SK-N-SH (cell line): ENCODE measurements at regions of chr17 and their contacts with region 1.

Region 1: DNA sequence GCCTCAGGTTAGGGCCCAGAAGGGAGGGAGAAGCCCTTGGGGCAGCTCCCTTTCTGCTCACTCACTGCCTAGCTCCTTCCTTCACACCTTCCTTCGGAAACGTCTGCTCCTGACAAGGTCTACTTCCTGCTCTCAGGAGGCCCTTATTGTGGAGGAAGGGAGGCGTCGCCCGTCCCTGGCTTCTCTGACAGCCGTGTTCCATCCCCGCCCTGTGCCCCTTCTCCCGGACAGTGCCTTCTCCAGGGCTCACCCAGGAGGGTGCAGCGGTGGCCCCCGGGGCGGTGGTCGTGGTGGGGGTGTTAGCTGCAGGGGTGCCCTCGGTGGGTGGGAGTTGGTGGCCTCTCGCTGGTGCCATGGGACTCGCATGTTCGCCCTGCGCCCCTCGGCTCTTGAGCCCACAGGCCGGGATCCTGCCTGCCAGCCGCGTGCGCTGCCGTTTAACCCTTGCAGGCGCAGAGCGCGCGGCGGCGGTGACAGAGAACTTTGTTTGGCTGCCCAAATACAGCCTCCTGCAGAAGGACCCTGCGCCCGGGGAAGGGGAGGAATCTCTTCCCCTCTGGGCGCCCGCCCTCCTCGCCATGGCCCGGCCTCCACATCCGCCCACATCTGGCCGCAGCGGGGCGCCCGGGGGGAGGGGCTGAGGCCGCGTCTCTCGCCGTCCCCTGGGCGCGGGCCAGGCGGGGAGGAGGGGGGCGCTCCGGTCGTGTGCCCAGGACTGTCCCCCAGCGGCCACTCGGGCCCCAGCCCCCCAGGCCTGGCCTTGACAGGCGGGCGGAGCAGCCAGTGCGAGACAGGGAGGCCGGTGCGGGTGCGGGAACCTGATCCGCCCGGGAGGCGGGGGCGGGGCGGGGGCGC is 231.9 kb downstream of the SEC14L1 start:
- DNase-seq: peak; percentile 98
- H3K4me3 ChIP-seq: peak overlapping the region; percentile 88 to 95
- H3K27ac ChIP-seq: peak overlapping the region in 1 of 2 experiments; percentile 100; a peak in 2 of 4 replicates
- H3K4me1 ChIP-seq: peaks cover 31 to 64% of the 10 kb centered on the region in 2 experiments
- H3K27me3 ChIP-seq: no peaks in the 10 kb centered on the region
- CTCF ChIP-seq: no peak
- EP300 ChIP-seq: no peak
- RAD21 ChIP-seq: peak; percentile 28

Region 2: GRCh38 chr17:77312786-77313599 is 59.7 kb before region 1 on chr17:
- CTCF ChIA-PET with region 1: interaction called, 3 read pairs
- POLR2A ChIA-PET with region 1: interaction called, 12 read pairs
- DNase-seq: peak; percentile 29
- H3K4me3 ChIP-seq: no peak overlapping the region
- H3K27ac ChIP-seq: peak overlapping the region in 1 of 2 experiments; percentile 3; a peak in 1 of 4 replicates
- H3K4me1 ChIP-seq: peaks cover 42 to 67% of the 10 kb centered on the region in 2 experiments
- H3K27me3 ChIP-seq: no peaks in the 10 kb centered on the region
- CTCF ChIP-seq: no peak
- EP300 ChIP-seq: no peak
- RAD21 ChIP-seq: no peak

Region 3: GRCh38 chr17:77382966-77383612 is 10.4 kb after region 1 on chr17:
- CTCF ChIA-PET with region 1: interaction called, 21 read pairs
- POLR2A ChIA-PET with region 1: interaction called, 44 read pairs
- DNase-seq: no peak
- H3K4me3 ChIP-seq: no peak overlapping the region
- H3K27ac ChIP-seq: peak overlapping the region in 1 of 2 experiments; percentile 12; a peak in 1 of 4 replicates
- H3K4me1 ChIP-seq: peaks cover 15 to 94% of the 10 kb centered on the region in 2 experiments; a peak in 3 of 4 replicates
- H3K27me3 ChIP-seq: no peaks in the 10 kb centered on the region
- CTCF ChIP-seq: no peak
- EP300 ChIP-seq: no peak
- RAD21 ChIP-seq: no peak

Region 4: DNA sequence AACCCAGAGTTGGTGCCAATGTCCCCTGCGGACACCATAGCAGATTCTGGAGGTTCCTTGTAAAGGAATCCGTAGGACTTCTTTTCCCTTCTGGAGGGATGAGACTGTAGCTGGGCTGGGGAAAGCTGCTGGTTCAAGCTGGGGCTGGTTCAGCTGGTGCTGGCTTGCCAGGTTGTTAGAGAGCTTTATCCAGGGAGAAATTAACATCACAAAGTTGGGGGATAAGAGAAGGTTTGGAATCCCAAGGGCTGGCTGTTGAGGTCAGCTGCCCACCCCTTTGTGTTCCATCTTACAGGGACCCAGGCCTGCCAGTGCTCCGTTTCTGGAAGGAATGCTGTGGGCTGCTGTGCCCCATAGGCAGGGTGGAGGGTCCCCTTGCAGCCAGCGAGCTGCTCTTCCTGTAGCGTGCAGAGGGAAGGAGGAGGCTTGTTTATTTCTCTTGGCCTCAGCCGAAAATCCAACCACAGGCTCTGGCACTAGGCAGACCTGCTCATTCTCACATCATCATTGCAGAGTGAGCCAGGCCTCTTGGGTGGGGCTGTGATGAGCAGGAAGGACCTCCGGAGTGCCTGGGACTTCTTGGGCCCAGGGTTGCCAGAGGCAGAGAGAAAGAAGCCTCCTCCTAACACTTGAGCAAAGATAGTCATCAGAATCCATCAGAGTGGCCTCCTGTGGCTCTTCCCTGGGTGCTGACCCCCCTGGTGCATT is 19.2 kb after region 1 on chr17:
- CTCF ChIA-PET with region 1: interaction called, 21 read pairs
- POLR2A ChIA-PET with region 1: interaction called, 44 read pairs
- DNase-seq: no peak
- H3K4me3 ChIP-seq: no peak overlapping the region
- H3K27ac ChIP-seq: peak overlapping the region; percentile 73 to 83
- H3K4me1 ChIP-seq: peaks cover 60 to 76% of the 10 kb centered on the region in 2 experiments
- H3K27me3 ChIP-seq: no peaks in the 10 kb centered on the region
- CTCF ChIP-seq: no peak
- EP300 ChIP-seq: no peak; a peak in 1 of 4 replicates
- RAD21 ChIP-seq: no peak

Region 5: GRCh38 chr17:77420804-77421629 is 48.3 kb after region 1 on chr17:
- CTCF ChIA-PET with region 1: interaction called, 133 read pairs
- POLR2A ChIA-PET with region 1: interaction called, 13 read pairs
- DNase-seq: peak; percentile 72
- H3K4me3 ChIP-seq: peak overlapping the region; percentile 2 to 8; a peak in 2 of 4 replicates
- H3K27ac ChIP-seq: peak overlapping the region; percentile 67
- H3K4me1 ChIP-seq: peaks cover 74 to 76% of the 10 kb centered on the region in 2 experiments
- H3K27me3 ChIP-seq: no peaks in the 10 kb centered on the region
- CTCF ChIP-seq: 0 out of 2 replicates have a peak, but pooled peaks have one; percentile 2
- EP300 ChIP-seq: peak; percentile 22 to 58; a peak in 1 of 4 replicates
- RAD21 ChIP-seq: no peak

Region 6: DNA sequence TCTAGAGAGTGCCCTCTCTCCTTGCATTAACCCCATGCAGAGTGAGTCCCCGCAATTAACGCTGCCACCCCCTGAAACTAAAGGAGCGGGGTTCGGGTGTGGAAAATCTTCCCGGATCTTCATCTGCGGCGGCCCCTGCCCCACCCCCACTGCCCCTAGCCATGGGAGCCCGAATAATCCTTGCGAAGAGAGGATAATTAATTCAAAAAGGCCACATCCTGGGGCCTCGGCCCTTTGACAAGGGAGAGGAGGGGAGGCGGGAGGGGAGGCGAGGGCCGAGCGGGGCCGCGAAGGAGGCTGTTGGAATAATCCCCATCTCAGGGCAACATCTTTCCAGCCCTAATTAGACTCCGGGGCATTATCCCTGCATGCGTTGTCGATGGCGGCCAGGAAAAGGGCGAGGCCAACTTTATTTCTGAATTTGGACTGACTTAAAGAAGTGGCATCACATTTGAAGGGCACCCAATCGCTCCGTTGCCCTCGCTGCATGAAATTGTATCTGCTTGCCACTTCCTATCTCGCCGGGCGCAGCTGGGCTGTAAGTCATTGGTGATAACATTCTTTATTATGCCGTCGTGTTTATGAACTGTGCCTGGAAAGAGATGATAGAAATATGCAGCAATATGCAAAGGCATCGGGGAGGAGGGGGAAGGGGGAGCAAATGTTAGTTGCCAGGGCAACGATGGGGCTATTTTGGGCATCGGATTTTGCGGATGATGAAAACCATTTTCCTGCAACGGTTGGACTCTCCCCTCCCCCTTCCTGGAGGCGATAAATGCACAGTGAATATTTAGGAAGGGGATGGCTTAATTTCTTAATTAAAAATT is 198.7 kb after region 1 on chr17:
- CTCF ChIA-PET with region 1: no interaction called
- POLR2A ChIA-PET with region 1: no interaction called
- DNase-seq: peak; percentile 61
- H3K4me3 ChIP-seq: no peak overlapping the region
- H3K27ac ChIP-seq: no peak overlapping the region
- H3K4me1 ChIP-seq: peaks cover 0 to 5% of the 10 kb centered on the region in 2 experiments; a peak in 1 of 4 replicates
- H3K27me3 ChIP-seq: peaks cover 46% of the 10 kb centered on the region
- CTCF ChIP-seq: no peak
- EP300 ChIP-seq: no peak
- RAD21 ChIP-seq: no peak

Region 7: GRCh38 chr17:78082988-78083387 is 710.3 kb after region 1 on chr17:
- CTCF ChIA-PET with region 1: no interaction called
- POLR2A ChIA-PET with region 1: no interaction called
- DNase-seq: no peak
- H3K4me3 ChIP-seq: no peak overlapping the region
- H3K27ac ChIP-seq: no peak overlapping the region
- H3K4me1 ChIP-seq: no peaks in the 10 kb centered on the region
- H3K27me3 ChIP-seq: no peaks in the 10 kb centered on the region
- CTCF ChIP-seq: no peak
- EP300 ChIP-seq: no peak
- RAD21 ChIP-seq: no peak